ENCODE measurements at regions of chr16 and their contacts with region 1.

Region 1: DNA sequence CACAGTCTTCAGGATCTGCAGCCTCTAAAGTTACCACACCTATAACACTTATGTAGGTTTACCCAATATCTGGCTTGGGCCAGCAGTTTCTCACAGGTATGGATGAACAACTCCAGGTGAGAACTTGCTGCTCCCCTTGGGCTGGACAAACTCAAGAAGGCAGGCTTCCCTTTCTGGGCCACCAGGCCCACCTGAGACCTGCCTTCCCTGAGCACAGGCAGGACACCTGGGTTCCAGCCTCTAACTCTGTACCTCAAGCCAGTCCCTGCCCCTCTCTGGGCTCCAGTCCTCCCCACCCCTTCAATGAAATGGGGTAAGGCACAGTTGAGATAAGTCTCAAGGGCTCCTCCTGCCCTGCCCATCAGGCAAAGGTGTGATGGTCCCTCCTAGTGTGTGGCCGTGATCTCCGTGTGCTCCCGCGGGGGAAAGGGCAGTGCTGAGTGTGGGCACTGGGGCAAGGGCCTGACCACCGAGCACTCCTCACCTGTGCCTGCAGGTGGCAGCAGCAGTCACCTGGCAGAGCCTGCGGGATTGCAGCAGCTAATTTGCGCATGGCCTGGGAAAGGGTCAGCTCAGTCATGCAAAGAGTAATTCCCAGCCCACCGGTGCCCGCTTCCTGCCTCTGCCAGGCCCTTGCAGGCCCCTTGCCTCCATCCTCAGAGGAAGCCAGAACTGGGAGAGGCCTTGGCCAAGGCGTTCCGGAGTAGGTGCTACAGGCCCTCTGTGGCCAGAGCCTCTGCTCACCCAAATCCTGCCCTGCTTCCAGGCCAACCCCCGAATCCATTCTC is 28.2 kb upstream of the ADGRG1 start:
- DNase-seq: peak; percentile 67
- H3K4me3 ChIP-seq: no peak overlapping the region
- H3K27ac ChIP-seq: no peak overlapping the region
- H3K4me1 ChIP-seq: peaks cover 3% of the 10 kb centered on the region in 2 experiments; a peak in 1 of 4 replicates
- H3K27me3 ChIP-seq: no peaks in the 10 kb centered on the region
- CTCF ChIP-seq: peak; percentile 68
- EP300 ChIP-seq: no peak
- RAD21 ChIP-seq: peak; percentile 68

Region 2: DNA sequence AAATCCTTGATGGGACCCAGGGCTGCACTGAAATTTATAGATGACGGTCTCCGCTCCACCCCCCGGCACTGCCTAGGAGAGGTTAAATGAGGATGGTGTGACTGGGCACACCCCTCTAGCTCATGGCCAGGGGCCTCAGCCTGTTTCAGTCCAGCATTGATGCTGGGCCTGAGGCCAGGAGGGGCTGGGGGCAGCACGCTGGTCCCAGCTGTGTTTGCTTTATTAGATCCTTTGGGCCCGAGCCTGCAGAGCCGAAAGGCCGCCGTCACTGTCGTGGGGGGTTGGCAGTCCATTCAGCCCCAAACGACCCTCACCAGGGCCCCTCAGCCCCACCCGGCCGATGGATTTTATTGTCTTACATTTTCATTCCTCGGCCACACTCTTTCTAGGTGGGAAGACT is 103.1 kb before region 1 on chr16:
- CTCF ChIA-PET with region 1: no interaction called
- POLR2A ChIA-PET with region 1: no interaction called
- DNase-seq: no peak
- H3K4me3 ChIP-seq: no peak overlapping the region
- H3K27ac ChIP-seq: no peak overlapping the region
- H3K4me1 ChIP-seq: peaks cover 0 to 12% of the 10 kb centered on the region in 2 experiments; a peak in 1 of 4 replicates
- H3K27me3 ChIP-seq: no peaks in the 10 kb centered on the region
- CTCF ChIP-seq: no peak
- EP300 ChIP-seq: no peak
- RAD21 ChIP-seq: no peak

Region 3: DNA sequence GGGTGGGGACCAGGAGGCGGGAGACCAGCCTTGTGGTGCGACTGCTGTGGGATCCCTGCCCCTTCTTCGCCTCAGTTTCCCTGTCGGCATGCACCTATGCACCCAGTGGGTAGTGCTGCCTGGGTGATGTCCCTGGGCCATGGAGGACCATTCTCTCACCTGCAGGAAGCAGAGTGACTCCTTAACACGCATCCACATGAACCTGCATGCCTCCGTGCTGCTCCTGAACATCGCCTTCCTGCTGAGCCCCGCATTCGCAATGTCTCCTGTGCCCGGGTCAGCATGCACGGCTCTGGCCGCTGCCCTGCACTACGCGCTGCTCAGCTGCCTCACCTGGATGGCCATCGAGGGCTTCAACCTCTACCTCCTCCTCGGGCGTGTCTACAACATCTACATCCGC is 32.6 kb before region 1 on chr16:
- CTCF ChIA-PET with region 1: no interaction called
- POLR2A ChIA-PET with region 1: no interaction called
- DNase-seq: no peak
- H3K4me3 ChIP-seq: no peak overlapping the region
- H3K27ac ChIP-seq: no peak overlapping the region
- H3K4me1 ChIP-seq: no peaks in the 10 kb centered on the region; a peak in 2 of 4 replicates
- H3K27me3 ChIP-seq: no peaks in the 10 kb centered on the region
- CTCF ChIP-seq: no peak
- EP300 ChIP-seq: no peak
- RAD21 ChIP-seq: no peak

Region 4: GRCh38 chr16:57639172-57639887 is 39.1 kb after region 1 on chr16:
- CTCF ChIA-PET with region 1: interaction called, 10 read pairs
- POLR2A ChIA-PET with region 1: no interaction called
- DNase-seq: peak; percentile 93
- H3K4me3 ChIP-seq: no peak overlapping the region
- H3K27ac ChIP-seq: no peak overlapping the region
- H3K4me1 ChIP-seq: peaks cover 0 to 10% of the 10 kb centered on the region in 2 experiments; a peak in 1 of 4 replicates
- H3K27me3 ChIP-seq: no peaks in the 10 kb centered on the region
- CTCF ChIP-seq: no peak
- EP300 ChIP-seq: no peak
- RAD21 ChIP-seq: no peak